Activated CD4-positive, alpha-beta memory T cell treated with anti-CD3 and anti-CD28 coated beads for 36 hours (primary cell): ENCODE measurements at regions of chr6 and their contacts with region 1.

Region 1: GRCh38 chr6:37353761-37354525 is at the start of gene RNF8:
- DNase-seq: peak; percentile 96
- H3K4me3 Mint-ChIP-seq: peak within 1 kb of the TSS; percentile 91
- H3K27ac Mint-ChIP-seq: peak within 1 kb of the TSS; percentile 81
- H3K4me1 Mint-ChIP-seq: peaks cover 20% of the 10 kb centered on the region
- H3K27me3 Mint-ChIP-seq: no peaks in the 10 kb centered on the region
- total RNA-seq, gene RNF8: 24.3 to 25.6 TPM

Region 2: DNA sequence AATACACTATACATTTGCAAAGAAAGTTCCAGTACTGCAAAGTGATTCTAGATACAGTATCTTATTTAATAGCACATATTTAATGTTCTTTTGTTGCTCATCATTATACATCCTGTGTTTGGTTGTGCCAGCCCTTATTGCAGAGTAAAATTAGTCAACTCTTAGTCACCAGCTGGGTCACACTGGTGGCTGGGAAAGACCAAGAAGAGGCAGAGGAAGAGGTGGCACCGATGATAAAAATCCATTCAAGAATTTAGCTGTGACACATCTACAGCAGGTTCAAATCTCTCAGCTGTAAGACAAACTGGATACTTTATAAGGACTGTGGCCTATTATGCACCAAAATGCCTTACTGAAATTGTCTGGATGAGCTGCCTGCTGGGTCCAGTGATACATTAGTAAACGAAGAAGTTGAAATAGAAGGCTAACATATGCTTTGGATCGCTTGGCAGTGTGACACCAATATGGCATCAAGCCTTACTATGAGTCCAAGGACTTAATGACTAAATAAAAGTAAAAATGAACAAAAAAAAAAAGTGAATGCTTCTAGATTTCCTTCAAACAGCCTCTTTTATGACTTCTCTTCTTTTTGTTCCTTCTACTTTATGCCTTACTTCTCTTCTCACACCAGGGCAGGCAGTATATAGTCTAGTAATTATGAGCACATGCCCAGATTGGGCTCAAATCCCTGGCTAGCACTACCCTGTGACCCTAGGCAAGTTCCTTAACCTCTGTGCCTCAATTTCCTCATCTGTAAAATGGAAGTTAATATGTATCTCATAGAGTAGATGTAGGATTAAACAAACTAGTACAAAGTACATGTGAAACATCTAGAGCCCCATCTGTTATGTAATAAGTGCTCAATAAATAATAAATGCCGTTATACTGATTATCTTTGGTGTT is 29.6 kb before region 1 on chr6:
- CTCF ChIA-PET with region 1: interaction called, 10 read pairs
- POLR2A ChIA-PET with region 1: no interaction called
- intact Hi-C with region 1: no loop called
- DNase-seq: peak; percentile 67
- H3K4me3 Mint-ChIP-seq: no peak overlapping the region
- H3K27ac Mint-ChIP-seq: no peak overlapping the region
- H3K4me1 Mint-ChIP-seq: peaks cover 22% of the 10 kb centered on the region
- H3K27me3 Mint-ChIP-seq: no peaks in the 10 kb centered on the region

Region 3: DNA sequence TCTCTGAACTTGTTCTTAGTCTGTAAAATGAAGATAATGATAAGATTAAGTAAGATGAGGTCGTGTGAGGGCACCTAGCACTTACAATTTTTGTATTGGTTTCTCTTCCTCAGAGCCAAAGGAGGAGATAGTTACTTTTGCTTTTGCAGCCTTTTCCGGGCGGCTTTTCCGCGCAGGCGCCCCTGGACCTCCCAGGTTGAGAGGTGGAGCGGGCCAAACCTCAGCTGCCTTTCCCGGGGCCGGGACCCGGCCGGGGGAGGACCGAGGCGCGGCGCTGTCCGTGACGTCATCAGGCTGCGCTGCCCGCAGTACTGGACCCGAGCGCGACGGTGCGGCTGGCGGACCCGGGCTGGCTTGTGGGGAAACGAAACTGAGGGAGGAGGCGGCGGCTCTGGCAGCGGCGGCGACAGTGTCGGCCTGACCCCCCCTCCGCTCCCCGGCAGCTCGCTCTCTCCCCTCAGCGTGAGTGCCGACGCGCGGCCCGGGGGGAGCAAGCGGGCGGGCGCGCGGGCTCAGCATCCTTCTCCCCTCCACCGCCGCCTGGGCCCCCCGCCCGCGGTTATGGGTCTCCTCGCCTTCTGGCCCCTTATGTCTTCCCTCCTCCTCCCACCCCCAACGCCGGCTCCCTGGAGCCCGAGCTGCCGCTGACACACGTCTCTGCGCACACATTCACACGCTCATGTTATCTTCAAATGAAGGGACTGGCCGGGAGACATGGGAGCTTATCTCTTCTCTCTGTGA is 79.1 kb after region 1 on chr6 and contains the start of gene CMTR1:
- CTCF ChIA-PET with region 1: no interaction called
- POLR2A ChIA-PET with region 1: interaction called, 10 read pairs
- intact Hi-C with region 1: loop called (anchors 1 kb)
- DNase-seq: peak; percentile 98
- H3K4me3 Mint-ChIP-seq: peak within 1 kb of the TSS; percentile 91
- H3K27ac Mint-ChIP-seq: peak within 1 kb of the TSS; percentile 98
- H3K4me1 Mint-ChIP-seq: peaks cover 44% of the 10 kb centered on the region
- H3K27me3 Mint-ChIP-seq: peaks cover 2% of the 10 kb centered on the region
- total RNA-seq, gene CMTR1: 69.2 to 70.1 TPM